CD8-positive, alpha-beta T cell (primary cell): ENCODE measurements at regions of chr7 and their contacts with region 1.

Region 1: GRCh38 chr7:7190142-7190541 is 7.8 kb downstream of the C1GALT1 start:
- DNase-seq: no peak
- ATAC-seq: no peak
- H3K4me3 ChIP-seq: no peak overlapping the region
- H3K4me3 Mint-ChIP-seq: no peak overlapping the region
- H3K27ac ChIP-seq: no peak overlapping the region
- H3K27ac Mint-ChIP-seq: peak overlapping the region; percentile 46
- H3K4me1 ChIP-seq: peaks cover 53% of the 10 kb centered on the region
- H3K4me1 Mint-ChIP-seq: peaks cover 51% of the 10 kb centered on the region
- H3K27me3 ChIP-seq: no peaks in the 10 kb centered on the region
- H3K27me3 Mint-ChIP-seq: no peaks in the 10 kb centered on the region
- CTCF ChIP-seq: no peak

Region 2: DNA sequence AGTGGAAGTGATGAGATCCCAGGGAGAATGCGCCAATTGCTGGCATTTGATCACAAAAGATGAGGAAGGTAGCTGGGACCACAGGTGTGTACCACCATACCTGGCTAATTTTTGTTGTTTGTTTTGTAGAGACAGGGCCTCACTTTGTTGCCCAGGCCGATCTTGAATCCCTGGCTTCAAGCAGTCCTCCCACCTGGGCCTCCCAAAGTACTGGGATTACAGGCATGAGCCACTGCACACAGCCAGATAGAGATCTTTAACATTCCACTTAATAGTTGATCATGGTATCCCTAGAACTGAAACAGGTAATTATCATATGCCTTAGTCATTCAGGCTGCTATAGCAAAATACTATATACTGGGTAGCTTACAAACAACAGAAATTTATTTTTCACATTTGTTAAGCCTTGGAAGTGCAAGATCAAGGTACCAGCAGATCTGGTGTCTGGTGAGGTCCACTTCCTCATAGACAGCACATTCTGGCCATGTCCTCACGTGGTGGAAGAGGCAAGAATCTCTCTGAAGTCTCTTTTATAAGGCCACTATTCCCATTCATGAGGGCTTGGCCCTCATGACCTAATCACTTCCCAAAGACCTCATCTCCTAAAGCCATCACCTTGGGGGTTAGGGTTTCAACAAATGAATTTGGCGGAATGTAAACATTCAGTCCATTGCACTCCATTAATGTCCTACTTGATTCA is 145.5 kb before region 1 on chr7:
- CTCF ChIA-PET with region 1: no interaction called
- POLR2A ChIA-PET with region 1: no interaction called
- intact Hi-C with region 1: no loop called
- DNase-seq: no peak
- ATAC-seq: no peak
- H3K4me3 ChIP-seq: no peak overlapping the region
- H3K4me3 Mint-ChIP-seq: no peak overlapping the region
- H3K27ac ChIP-seq: no peak overlapping the region
- H3K27ac Mint-ChIP-seq: no peak overlapping the region
- H3K4me1 ChIP-seq: no peaks in the 10 kb centered on the region
- H3K4me1 Mint-ChIP-seq: peaks cover 9% of the 10 kb centered on the region
- H3K27me3 ChIP-seq: no peaks in the 10 kb centered on the region
- H3K27me3 Mint-ChIP-seq: peaks cover 2% of the 10 kb centered on the region
- CTCF ChIP-seq: no peak

Region 3: DNA sequence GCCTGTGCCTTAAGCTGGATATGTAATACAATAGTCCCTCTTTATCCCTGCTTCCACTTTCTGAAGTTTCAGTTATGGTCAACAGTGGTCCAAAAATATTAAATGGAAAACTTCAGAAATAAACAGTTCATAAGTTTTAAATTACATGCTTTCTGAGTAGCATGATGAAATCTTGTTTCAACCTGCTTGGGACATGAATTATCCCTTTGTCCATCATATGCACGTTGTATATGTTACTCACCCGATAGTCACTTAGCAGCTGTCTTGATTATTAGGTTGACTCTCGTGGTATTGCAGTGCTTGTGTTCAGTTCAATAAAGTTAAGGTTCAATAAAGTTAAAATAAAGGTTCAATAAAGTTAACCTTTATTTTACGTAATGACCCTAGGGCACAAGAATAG is 17.7 kb after region 1 on chr7:
- CTCF ChIA-PET with region 1: no interaction called
- POLR2A ChIA-PET with region 1: no interaction called
- intact Hi-C with region 1: loop called in 1 of 2 experiments (anchors 2 kb)
- DNase-seq: no peak
- ATAC-seq: no peak
- H3K4me3 ChIP-seq: no peak overlapping the region
- H3K4me3 Mint-ChIP-seq: no peak overlapping the region
- H3K27ac ChIP-seq: no peak overlapping the region
- H3K27ac Mint-ChIP-seq: no peak overlapping the region
- H3K4me1 ChIP-seq: peaks cover 25% of the 10 kb centered on the region
- H3K4me1 Mint-ChIP-seq: peaks cover 78% of the 10 kb centered on the region
- H3K27me3 ChIP-seq: no peaks in the 10 kb centered on the region
- H3K27me3 Mint-ChIP-seq: no peaks in the 10 kb centered on the region
- CTCF ChIP-seq: no peak

Region 4: GRCh38 chr7:7321720-7322128 is 131.6 kb after region 1 on chr7:
- CTCF ChIA-PET with region 1: no interaction called
- POLR2A ChIA-PET with region 1: no interaction called
- intact Hi-C with region 1: no loop called
- DNase-seq: no peak
- ATAC-seq: no peak
- H3K4me3 ChIP-seq: no peak overlapping the region
- H3K4me3 Mint-ChIP-seq: no peak overlapping the region
- H3K27ac ChIP-seq: no peak overlapping the region
- H3K27ac Mint-ChIP-seq: no peak overlapping the region
- H3K4me1 ChIP-seq: no peaks in the 10 kb centered on the region
- H3K4me1 Mint-ChIP-seq: no peaks in the 10 kb centered on the region
- H3K27me3 ChIP-seq: no peaks in the 10 kb centered on the region
- H3K27me3 Mint-ChIP-seq: peaks cover 3% of the 10 kb centered on the region
- CTCF ChIP-seq: no peak